Panc1 (cell line): ENCODE measurements at regions of chr11 and their contacts with region 1.

Region 1: GRCh38 chr11:5367448-5368074 is 16.1 kb upstream of the OR51M1 start:
- DNase-seq: no peak
- ATAC-seq: no peak
- H3K4me3 ChIP-seq: no peak overlapping the region
- H3K27ac ChIP-seq: no peak overlapping the region
- H3K4me1 ChIP-seq: no peaks in the 10 kb centered on the region
- H3K27me3 ChIP-seq: no peaks in the 10 kb centered on the region; the same call in 1 of the 2 replicates
- CTCF ChIP-seq: no peak

Region 2: DNA sequence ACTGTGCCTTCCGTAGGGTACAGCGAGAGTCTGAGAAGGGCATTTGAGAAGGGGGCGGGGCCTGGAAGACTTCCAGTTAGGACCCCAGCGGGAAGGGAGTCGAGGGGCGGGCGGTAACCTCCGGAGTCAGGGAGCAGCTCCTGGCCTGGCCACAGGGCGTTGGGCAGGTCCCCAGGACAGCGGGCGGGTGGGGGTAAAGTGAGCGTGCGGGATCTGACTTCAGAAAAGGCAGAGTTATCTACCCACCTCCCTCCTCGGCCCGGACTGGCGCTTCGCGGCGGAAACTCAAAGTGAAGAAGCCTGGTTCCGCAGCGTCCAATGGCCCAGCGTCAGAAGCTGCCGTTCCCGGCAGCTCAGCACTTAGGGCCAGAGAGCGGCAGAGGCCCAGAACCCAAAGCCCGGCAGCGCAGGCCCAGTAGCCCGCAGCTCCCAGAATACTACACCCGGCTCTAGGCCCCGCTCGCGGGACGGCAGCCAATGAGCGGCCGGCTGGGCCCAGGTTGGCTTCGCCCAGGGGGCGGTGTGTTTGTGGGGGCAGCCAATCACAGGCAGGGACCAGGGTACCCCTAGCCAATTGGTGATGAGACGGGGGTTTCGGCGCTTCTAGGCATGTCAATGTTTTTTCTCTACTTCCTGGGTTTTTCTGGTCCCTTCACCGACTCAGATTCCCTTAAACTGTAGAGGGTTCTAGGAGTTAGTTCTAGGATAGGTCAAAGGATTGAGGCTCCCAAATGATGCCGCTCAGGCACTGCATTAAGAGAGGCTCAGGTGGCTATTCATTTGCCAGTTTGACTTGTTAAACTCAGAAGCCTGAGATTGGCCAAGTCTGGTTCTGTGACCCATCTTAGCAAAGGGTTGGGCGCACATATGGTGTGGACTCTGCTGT is 759.5 kb before region 1 on chr11 and contains the start of gene TRIM68:
- CTCF ChIA-PET with region 1: no interaction called
- POLR2A ChIA-PET with region 1: interaction called, 21 read pairs
- in situ Hi-C with region 1: no loop called
- intact Hi-C with region 1: no loop called
- DNase-seq: peak; percentile 85
- ATAC-seq: peak; percentile 100
- H3K4me3 ChIP-seq: peak within 1 kb of the TSS; percentile 67 to 79
- H3K27ac ChIP-seq: peak within 1 kb of the TSS; percentile 80
- H3K4me1 ChIP-seq: peaks cover 10% of the 10 kb centered on the region; the same call in 1 of the 2 replicates
- H3K27me3 ChIP-seq: no peaks in the 10 kb centered on the region; the same call in 1 of the 2 replicates
- CTCF ChIP-seq: no peak
- total RNA-seq, gene TRIM68: 18.5 TPM